Activated CD8-positive, alpha-beta T cell treated with anti-CD3 and anti-CD28 coated beads for 36 hours (primary cell): ENCODE measurements at regions of chr9 and their contacts with region 1.

Region 1: DNA sequence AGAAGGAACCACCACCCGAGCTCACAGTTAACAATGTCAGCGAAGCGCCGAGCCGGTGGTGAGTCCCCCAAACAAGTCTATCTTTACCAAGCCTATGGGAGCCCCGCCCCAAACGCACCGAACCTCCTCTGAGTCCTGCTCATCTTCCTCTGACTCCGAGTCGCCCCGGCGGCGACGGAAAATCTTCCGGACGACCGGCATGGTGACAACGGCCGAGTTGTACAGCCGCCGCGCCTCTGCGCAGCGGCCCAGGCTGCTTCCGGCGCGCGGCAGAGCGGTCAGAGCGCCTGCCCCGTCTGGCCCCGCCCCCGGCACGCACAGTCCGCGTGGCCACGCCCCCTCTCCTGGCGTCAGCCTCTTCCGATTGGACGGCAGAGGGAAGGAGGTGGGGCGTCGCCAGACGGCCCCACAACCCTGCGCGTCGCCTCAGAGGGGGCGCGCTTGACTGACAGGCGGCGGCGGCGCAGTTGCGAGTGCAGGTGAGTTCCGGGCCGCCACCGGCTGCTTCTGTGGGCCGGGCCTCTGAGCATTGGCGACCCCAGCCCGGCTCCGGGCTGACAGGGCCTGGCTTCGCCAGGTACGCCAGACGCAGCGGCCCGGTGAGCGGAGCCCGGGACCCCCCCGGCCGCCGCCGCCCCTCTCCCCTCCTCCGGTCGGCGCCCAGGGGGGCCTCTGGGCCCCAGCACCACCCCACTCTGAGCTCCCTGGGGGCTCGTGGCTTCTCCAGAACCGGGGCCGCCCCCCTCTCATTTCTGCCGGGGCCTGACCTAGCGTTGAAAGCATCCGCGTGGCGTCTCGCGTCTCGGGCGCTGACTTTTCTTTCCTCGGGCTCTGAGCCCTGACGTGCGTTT is at the starts of genes C9orf78 and USP20:
- DNase-seq: peak; percentile 97
- ATAC-seq: peak; percentile 94
- H3K4me3 Mint-ChIP-seq: peak within 1 kb of the TSS; percentile 85
- H3K27ac Mint-ChIP-seq: peak within 1 kb of the TSS; percentile 95
- H3K4me1 Mint-ChIP-seq: peaks cover 54% of the 10 kb centered on the region
- H3K27me3 Mint-ChIP-seq: no peaks in the 10 kb centered on the region
- CTCF ChIP-seq: no peak
- total RNA-seq, gene C9orf78: 44.5 to 51.7 TPM
- total RNA-seq, gene USP20: 55.3 to 55.9 TPM

Region 2: DNA sequence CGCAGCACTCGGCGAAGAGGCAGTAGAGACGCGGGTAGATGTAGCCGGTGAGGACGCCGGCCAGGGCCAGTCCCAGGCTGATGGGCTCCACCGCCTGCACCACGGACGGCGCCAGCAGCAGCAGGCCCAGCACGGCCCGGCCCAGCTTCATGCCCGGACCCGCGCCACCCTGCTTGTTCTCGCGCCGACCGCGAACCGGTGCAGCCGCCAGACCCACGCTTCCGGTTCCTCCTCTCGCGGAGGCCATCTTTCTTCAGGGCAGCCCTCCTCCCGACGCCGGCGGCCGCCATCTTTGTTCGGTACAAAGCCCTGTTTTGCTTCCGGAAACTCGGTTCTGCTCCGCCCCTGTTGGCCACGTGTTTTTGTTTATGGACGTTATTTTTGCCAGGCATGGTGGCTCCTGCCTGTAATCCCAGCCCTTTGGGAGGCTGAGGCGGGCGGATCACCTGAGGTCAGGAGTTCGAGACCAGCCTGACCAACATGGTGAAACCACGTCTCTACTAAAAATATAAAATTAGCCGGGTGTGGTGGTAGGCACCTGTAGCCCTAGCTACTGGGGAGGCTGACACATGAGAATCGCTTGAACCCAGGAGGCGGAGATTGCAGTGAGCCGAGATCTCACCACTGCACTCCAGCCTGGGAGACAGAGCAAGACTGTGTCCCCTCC is 11.2 kb before region 1 on chr9 and contains the start of gene TOR1A:
- CTCF ChIA-PET with region 1: no interaction called
- POLR2A ChIA-PET with region 1: interaction called, 17 read pairs
- intact Hi-C with region 1: no loop called
- DNase-seq: peak; percentile 97
- ATAC-seq: peak; percentile 92
- H3K4me3 Mint-ChIP-seq: peak within 1 kb of the TSS; percentile 86
- H3K27ac Mint-ChIP-seq: peak within 1 kb of the TSS; percentile 61
- H3K4me1 Mint-ChIP-seq: peaks cover 12% of the 10 kb centered on the region
- H3K27me3 Mint-ChIP-seq: no peaks in the 10 kb centered on the region
- CTCF ChIP-seq: no peak
- total RNA-seq, gene TOR1A: 31.9 to 32.4 TPM

Region 3: DNA sequence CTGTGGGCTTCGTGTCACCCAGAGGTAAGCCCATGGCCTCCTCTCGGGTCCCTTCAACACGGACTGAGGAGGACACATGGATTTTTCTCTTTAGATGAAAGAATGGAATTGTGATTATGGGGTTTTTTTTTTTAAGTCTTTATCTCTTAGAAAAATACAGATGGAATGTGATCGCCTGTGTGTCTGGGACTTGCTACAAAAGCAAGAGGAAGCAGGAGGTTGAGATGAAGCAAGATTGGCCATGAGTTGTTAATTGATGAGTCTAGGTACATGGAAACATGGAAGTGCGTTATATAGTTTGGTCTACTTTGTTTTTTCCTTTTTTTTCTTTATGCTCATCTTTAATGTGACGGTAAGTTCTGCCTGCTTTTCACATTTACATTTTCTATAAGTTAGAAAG is 14.7 kb after region 1 on chr9:
- CTCF ChIA-PET with region 1: interaction called, 3 read pairs
- POLR2A ChIA-PET with region 1: interaction called, 12 read pairs
- intact Hi-C with region 1: no loop called
- DNase-seq: no peak
- ATAC-seq: no peak
- H3K4me3 Mint-ChIP-seq: no peak overlapping the region
- H3K27ac Mint-ChIP-seq: peak overlapping the region; percentile 52
- H3K4me1 Mint-ChIP-seq: peaks cover 46% of the 10 kb centered on the region
- H3K27me3 Mint-ChIP-seq: no peaks in the 10 kb centered on the region
- CTCF ChIP-seq: no peak

Region 4: GRCh38 chr9:129868916-129869486 is 33.8 kb after region 1 on chr9:
- CTCF ChIA-PET with region 1: interaction called, 4 read pairs
- POLR2A ChIA-PET with region 1: interaction called, 44 read pairs
- intact Hi-C with region 1: no loop called
- DNase-seq: peak; percentile 93
- ATAC-seq: peak; percentile 81
- H3K4me3 Mint-ChIP-seq: peak overlapping the region; percentile 69
- H3K27ac Mint-ChIP-seq: peak overlapping the region; percentile 94
- H3K4me1 Mint-ChIP-seq: peaks cover 72% of the 10 kb centered on the region
- H3K27me3 Mint-ChIP-seq: no peaks in the 10 kb centered on the region
- CTCF ChIP-seq: peak; percentile 22